Transverse colon (tissue), 4 donors: ENCODE measurements at regions of chr19 and their contacts with region 1.

Region 1: DNA sequence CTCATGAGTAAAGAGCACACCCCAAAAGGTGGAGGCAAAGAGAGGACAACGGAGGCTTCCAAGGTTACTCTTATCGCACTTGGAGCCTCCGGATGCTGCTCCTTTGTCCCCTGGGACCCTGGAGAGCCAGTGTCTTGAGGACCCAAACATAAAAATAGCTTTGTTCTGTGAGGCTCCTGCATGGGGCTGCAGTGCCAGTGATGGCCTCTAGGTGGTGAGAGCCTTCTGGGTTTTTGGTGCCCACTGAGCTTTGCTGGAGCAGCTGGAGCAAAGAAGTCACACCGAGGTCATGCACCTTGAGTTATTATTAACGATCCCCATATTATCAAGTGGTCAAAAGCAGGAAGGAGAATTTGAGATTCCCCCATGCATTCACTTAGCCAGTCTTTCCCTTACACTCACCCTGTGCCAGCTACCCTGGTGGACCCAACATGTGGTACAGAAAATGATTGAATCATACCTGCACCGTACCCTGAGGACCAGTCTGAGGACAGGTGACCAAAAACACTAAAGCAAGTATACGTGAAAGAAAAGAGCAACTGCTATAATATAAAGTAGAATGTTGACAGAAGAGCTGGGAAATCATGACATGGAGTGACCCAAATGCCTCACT is 41.5 kb downstream of the ZNF682 start:
- DNase-seq: peak; percentile 24
- H3K4me3 ChIP-seq: no peak overlapping the region
- H3K27ac ChIP-seq: no peak overlapping the region
- H3K4me1 ChIP-seq: no peaks in the 10 kb centered on the region
- H3K27me3 ChIP-seq: no peaks in the 10 kb centered on the region
- CTCF ChIP-seq: peak; percentile 42 to 75 (median 59)
- EP300 ChIP-seq: no peak
- POLR2A ChIP-seq: no peak

Region 2: GRCh38 chr19:19451429-19452242 is 546.1 kb before region 1 on chr19:
- in situ Hi-C with region 1: no loop called
- intact Hi-C with region 1: no loop called
- DNase-seq: no peak
- H3K4me3 ChIP-seq: no peak overlapping the region
- H3K27ac ChIP-seq: peak overlapping the region; percentile 77 to 88 (median 85)
- H3K4me1 ChIP-seq: peaks cover 12 to 45% (median 32%) of the 10 kb centered on the region in 4 donors
- H3K27me3 ChIP-seq: no peaks in the 10 kb centered on the region
- CTCF ChIP-seq: no peak
- EP300 ChIP-seq: no peak
- POLR2A ChIP-seq: no peak

Region 3: GRCh38 chr19:20167020-20167644 is 169.4 kb after region 1 on chr19 and contains the start of gene ZNF486:
- in situ Hi-C with region 1: no loop called
- intact Hi-C with region 1: no loop called
- DNase-seq: peak; percentile 95
- H3K4me3 ChIP-seq: peak within 1 kb of the TSS; percentile 34 to 80 (median 58)
- H3K27ac ChIP-seq: peak within 1 kb of the TSS; percentile 80 to 85 (median 84)
- H3K4me1 ChIP-seq: peaks cover 5 to 14% (median 7%) of the 10 kb centered on the region in 4 donors
- H3K27me3 ChIP-seq: no peaks in the 10 kb centered on the region
- CTCF ChIP-seq: no peak
- EP300 ChIP-seq: no peak
- POLR2A ChIP-seq: peak; percentile 63
- total RNA-seq, gene ZNF486: 0.80 to 3.5 (median 3.3) TPM in 3 of 4 donors, not detected in the other

Region 4: DNA sequence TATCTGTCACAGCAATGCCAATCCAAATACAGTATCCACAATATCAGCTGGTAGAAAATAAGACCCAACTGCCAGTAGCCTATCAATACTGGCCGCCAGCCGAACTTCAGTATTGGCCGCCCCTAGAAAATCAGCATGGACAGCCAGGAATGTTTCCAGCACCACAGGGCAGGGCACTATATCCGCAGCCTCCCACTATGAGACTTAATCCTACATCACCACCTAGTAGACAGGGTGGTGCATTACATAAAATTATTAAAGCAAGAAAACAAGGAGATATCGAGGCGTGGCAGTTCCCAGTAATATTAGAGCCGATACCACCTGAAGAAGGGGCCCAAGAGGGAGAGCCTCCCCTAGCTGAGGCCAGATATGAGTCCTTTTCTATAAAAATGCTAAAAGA is 280.6 kb after region 1 on chr19:
- in situ Hi-C with region 1: no loop called
- intact Hi-C with region 1: loop called (anchors 10 kb)
- DNase-seq: peak; percentile 12
- H3K4me3 ChIP-seq: no peak overlapping the region
- H3K27ac ChIP-seq: no peak overlapping the region
- H3K4me1 ChIP-seq: peaks cover 0 to 3% (median 0%) of the 10 kb centered on the region in 4 donors
- H3K27me3 ChIP-seq: no peaks in the 10 kb centered on the region
- CTCF ChIP-seq: peak in 3 of 5 experiments; percentile 33 to 57 (median 48)
- EP300 ChIP-seq: no peak
- POLR2A ChIP-seq: no peak